Mammary epithelial cell (primary cell): ENCODE measurements at regions of chr10 and their contacts with region 1.

Region 1: GRCh38 chr10:69318106-69318866 is 40.0 kb downstream of the HK1 start:
- DNase-seq: peak; percentile 88
- H3K4me3 ChIP-seq: peak overlapping the region; percentile 84 to 96 (median 96)
- H3K27ac ChIP-seq: peak overlapping the region; percentile 49
- H3K4me1 ChIP-seq: peaks cover 41% of the 10 kb centered on the region
- H3K27me3 ChIP-seq: no peaks in the 10 kb centered on the region
- CTCF ChIP-seq: peak in 1 of 2 donors; percentile 0

Region 2: GRCh38 chr10:69237528-69238159 is 80.6 kb before region 1 on chr10:
- CTCF ChIA-PET with region 1: no interaction called
- dilution Hi-C with region 1: loop called (anchors 10 kb)
- in situ Hi-C with region 1: no loop called
- intact Hi-C with region 1: loop called (anchors 1 kb)
- DNase-seq: peak; percentile 61
- H3K4me3 ChIP-seq: no peak overlapping the region
- H3K27ac ChIP-seq: no peak overlapping the region
- H3K4me1 ChIP-seq: peaks cover 13% of the 10 kb centered on the region
- H3K27me3 ChIP-seq: no peaks in the 10 kb centered on the region
- CTCF ChIP-seq: peak; percentile 90 to 92

Region 3: GRCh38 chr10:69337296-69338132 is 19.2 kb after region 1 on chr10:
- CTCF ChIA-PET with region 1: no interaction called
- dilution Hi-C with region 1: no loop called
- in situ Hi-C with region 1: no loop called
- intact Hi-C with region 1: loop called (anchors 2 kb)
- DNase-seq: peak; percentile 95
- H3K4me3 ChIP-seq: peak overlapping the region in 1 of 3 experiments; percentile 17
- H3K27ac ChIP-seq: peak overlapping the region; percentile 72
- H3K4me1 ChIP-seq: peaks cover 81% of the 10 kb centered on the region
- H3K27me3 ChIP-seq: no peaks in the 10 kb centered on the region
- CTCF ChIP-seq: no peak

Region 4: GRCh38 chr10:69348816-69349541 is 30.7 kb after region 1 on chr10:
- CTCF ChIA-PET with region 1: no interaction called
- dilution Hi-C with region 1: no loop called
- in situ Hi-C with region 1: no loop called
- intact Hi-C with region 1: loop called (anchors 1 kb)
- DNase-seq: peak; percentile 97
- H3K4me3 ChIP-seq: no peak overlapping the region
- H3K27ac ChIP-seq: peak overlapping the region; percentile 87
- H3K4me1 ChIP-seq: peaks cover 39% of the 10 kb centered on the region
- H3K27me3 ChIP-seq: no peaks in the 10 kb centered on the region
- CTCF ChIP-seq: no peak

Region 5: GRCh38 chr10:69360485-69361324 is 42.4 kb after region 1 on chr10:
- CTCF ChIA-PET with region 1: no interaction called
- dilution Hi-C with region 1: no loop called
- in situ Hi-C with region 1: no loop called
- intact Hi-C with region 1: loop called (anchors 1 kb)
- DNase-seq: peak; percentile 88
- H3K4me3 ChIP-seq: no peak overlapping the region
- H3K27ac ChIP-seq: peak overlapping the region; percentile 10
- H3K4me1 ChIP-seq: peaks cover 43% of the 10 kb centered on the region
- H3K27me3 ChIP-seq: no peaks in the 10 kb centered on the region
- CTCF ChIP-seq: no peak

Region 6: DNA sequence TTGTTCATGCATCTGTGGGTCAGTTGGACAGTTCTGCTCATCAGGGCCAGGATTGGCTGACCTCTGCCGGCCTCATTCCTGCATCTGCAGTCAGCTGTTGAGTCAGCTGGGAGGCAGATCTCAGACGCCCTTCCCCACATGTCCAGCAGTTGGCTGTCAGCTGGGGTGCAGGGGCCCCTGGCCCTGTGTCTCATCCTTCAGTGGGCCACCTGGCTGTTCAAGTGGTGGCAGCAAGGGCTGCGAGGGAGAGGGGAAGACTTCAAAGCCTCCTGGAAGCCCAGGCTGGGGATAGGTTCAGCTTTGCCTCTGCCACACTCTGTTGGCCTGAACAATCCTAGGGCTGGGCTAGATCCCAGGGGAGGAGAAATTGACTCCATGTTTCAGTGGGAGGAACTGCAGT is 65.3 kb after region 1 on chr10:
- CTCF ChIA-PET with region 1: no interaction called
- dilution Hi-C with region 1: no loop called
- in situ Hi-C with region 1: no loop called
- intact Hi-C with region 1: loop called (anchors 2 kb)
- DNase-seq: no peak
- H3K4me3 ChIP-seq: no peak overlapping the region
- H3K27ac ChIP-seq: no peak overlapping the region
- H3K4me1 ChIP-seq: peaks cover 42% of the 10 kb centered on the region
- H3K27me3 ChIP-seq: no peaks in the 10 kb centered on the region
- CTCF ChIP-seq: peak in 1 of 2 donors; percentile 13